PC-9 (cell line): ENCODE measurements at regions of chr19 and their contacts with region 1.

Region 1: GRCh38 chr19:37763488-37763887 is 15.9 kb downstream of the ZNF573 start:
- DNase-seq: peak in 1 of 2 experiments; percentile 44
- H3K4me3 ChIP-seq: no peak overlapping the region
- H3K27ac ChIP-seq: no peak overlapping the region
- H3K4me1 ChIP-seq: no peaks in the 10 kb centered on the region
- H3K27me3 ChIP-seq: no peaks in the 10 kb centered on the region
- CTCF ChIP-seq: no peak

Region 2: DNA sequence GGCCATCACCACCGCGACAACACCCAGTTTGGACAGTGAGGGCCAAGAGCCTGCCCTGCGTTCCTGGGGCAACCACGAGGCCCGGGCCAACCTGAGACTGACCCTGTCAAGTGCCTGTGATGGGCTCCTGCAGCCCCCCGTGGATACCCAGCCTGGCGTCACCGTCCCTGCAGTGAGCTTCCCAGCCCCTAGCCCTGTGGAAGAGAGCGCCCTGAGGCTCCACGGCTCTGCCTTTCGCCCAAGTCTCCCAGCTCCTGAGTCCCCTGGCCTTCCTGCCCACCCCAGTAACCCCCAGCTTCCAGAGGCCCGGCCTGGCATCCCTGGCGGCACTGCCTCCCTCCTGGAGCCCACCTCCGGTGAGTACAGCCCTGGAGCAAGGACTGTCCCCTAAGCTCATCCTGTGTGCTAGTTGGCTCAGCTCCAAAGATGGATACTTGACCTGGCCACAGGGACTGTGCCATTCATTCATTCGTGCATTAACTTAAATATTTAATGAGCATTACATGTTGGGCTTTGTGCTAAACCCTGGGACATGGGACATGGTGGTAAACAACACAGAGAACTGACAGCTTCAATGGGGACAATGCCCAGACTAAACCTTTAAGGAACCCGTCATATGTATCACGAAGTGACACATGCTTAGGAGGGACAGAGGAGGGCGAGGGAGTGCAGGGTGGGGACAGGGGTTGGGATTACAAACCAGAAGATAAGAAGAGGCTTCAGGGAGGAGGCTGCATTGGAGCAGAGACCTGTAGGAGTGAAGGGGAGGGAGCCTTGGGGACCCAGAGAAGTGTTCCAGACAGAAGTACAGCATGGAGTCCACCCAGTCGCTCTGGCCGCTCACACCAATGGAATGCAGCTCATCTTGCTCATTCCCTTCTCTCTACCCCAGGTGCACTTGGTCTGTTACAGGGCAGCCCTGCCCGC is 1659.6 kb before region 1 on chr19:
- CTCF ChIA-PET with region 1: no interaction called
- POLR2A ChIA-PET with region 1: interaction called, 21 read pairs
- intact Hi-C with region 1: no loop called
- DNase-seq: peak; percentile 61 to 68
- H3K4me3 ChIP-seq: no peak overlapping the region
- H3K27ac ChIP-seq: no peak overlapping the region
- H3K4me1 ChIP-seq: peaks cover 10% of the 10 kb centered on the region
- H3K27me3 ChIP-seq: no peaks in the 10 kb centered on the region
- CTCF ChIP-seq: no peak

Region 3: DNA sequence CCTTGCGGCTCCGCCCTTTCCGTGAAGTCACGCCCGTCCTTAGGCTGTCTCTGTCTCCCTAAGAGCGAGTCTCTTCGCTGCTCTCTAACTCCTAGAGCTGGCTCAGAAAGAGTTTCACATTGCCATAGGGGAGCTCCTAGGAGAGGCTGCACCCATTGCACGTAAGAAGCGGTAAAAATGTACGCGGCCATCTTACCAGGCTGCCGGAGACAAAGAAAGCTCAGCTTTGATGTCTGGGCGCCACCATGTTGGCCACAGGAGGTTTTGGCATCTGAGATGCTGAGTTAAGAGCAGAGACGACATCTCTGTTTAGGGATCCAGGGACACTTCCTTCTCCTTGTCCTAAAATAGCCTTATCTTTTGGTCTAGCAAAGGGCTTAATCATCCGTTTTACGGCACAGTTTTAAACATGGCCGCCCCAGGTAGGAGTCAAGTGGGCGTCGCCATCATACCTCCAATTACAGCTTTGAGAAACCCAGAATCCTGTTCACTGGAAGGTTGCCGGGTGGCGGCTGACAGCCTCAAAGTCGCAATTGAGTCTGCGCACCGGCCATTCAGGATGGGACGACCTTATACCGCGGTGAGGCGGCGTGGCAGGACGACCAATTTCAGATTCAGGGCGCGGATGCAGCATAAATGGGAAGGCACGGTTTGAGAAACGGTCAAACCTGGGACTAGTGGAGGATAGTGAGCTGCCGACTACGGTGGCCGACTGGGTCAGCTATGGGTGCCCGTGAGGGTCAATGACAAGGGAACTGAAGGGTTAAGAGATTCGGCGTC is 256.9 kb before region 1 on chr19 and contains the start of gene ZNF793:
- CTCF ChIA-PET with region 1: no interaction called
- POLR2A ChIA-PET with region 1: no interaction called
- intact Hi-C with region 1: no loop called
- DNase-seq: peak; percentile 75
- H3K4me3 ChIP-seq: peak within 1 kb of the TSS; percentile 86
- H3K27ac ChIP-seq: peak within 1 kb of the TSS; percentile 80
- H3K4me1 ChIP-seq: no peaks in the 10 kb centered on the region
- H3K27me3 ChIP-seq: no peaks in the 10 kb centered on the region
- CTCF ChIP-seq: no peak
- total RNA-seq, gene ZNF793: 5.2 and 7.2 TPM in 2 replicates

Region 4: DNA sequence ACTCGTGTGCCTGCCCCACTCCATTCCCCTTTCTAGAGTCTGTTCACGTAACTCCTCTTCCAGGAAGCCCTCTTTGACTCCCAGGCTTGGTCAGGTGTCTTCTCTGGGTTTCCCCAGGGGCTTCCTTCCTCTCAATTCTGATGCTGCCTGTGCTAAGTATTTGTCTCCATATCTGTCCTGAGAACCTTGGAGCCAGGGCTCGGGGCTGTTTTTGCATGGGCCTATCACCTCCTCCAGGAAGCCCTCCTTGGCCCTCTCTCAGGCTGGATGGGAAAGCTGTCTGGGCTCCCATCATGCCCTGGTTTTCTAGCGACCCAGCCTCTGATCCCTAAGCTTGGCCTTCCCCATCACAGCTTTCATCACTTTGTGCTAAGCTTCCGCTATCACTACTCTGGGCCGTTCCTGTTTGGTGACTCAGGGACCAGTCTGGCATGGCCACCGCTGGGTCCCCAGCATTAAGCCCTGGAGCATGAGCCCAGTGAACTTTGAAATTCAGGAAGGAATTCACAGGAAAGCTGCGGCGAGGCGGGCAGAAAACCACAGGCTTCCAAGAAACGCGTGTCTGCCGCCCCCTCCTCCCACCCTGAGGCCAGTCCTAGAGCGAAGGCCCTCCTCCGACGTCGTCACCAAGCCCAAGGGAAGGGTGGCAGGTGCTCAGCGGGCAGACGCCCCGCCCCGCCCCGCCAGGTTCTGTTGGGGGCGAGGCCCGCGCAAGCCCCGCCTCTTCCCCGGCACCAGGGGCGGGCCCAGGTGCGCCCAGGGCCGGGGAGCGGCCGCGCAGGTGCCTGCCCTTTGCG is 500.4 kb after region 1 on chr19:
- CTCF ChIA-PET with region 1: no interaction called
- POLR2A ChIA-PET with region 1: no interaction called
- intact Hi-C with region 1: no loop called
- DNase-seq: peak; percentile 97 to 99
- H3K4me3 ChIP-seq: peak overlapping the region; percentile 34; the same call in 1 of the 2 replicates
- H3K27ac ChIP-seq: peak overlapping the region; percentile 94
- H3K4me1 ChIP-seq: peaks cover 35% of the 10 kb centered on the region
- H3K27me3 ChIP-seq: no peaks in the 10 kb centered on the region
- CTCF ChIP-seq: no peak